Transverse colon (tissue), 4 donors: ENCODE measurements at regions of chr6 and their contacts with region 1.

Region 1: GRCh38 chr6:79117752-79118151 is 39.7 kb upstream of the PHIP start:
- DNase-seq: no peak
- H3K4me3 ChIP-seq: no peak overlapping the region
- H3K27ac ChIP-seq: no peak overlapping the region
- H3K4me1 ChIP-seq: no peaks in the 10 kb centered on the region
- H3K27me3 ChIP-seq: no peaks in the 10 kb centered on the region
- CTCF ChIP-seq: no peak
- EP300 ChIP-seq: no peak
- POLR2A ChIP-seq: no peak

Region 2: DNA sequence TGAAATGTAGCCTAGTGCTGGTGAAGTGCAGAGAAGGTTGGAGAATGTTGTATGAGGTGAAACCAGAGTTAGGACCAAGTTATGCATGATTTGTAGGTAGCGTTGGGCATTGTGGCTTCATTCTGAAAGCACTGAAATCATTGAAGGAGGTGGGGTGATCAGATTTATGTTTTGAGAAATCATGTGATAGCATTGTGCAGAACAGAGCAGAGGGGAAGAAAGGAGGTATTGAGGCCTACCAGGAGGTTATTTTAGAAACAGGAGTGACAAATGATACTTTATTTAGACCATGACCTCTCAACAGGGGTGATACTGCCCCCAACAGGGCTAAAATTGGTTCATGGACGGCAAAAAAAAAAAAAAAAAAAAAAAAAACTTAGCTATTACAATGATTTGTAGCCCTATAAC is 132.4 kb after region 1 on chr6:
- in situ Hi-C with region 1: loop called in 1 of 4 experiments (anchors 25 kb)
- intact Hi-C with region 1: no loop called
- DNase-seq: no peak
- H3K4me3 ChIP-seq: no peak overlapping the region
- H3K27ac ChIP-seq: no peak overlapping the region
- H3K4me1 ChIP-seq: no peaks in the 10 kb centered on the region
- H3K27me3 ChIP-seq: no peaks in the 10 kb centered on the region
- CTCF ChIP-seq: no peak
- EP300 ChIP-seq: no peak
- POLR2A ChIP-seq: no peak

Region 3: DNA sequence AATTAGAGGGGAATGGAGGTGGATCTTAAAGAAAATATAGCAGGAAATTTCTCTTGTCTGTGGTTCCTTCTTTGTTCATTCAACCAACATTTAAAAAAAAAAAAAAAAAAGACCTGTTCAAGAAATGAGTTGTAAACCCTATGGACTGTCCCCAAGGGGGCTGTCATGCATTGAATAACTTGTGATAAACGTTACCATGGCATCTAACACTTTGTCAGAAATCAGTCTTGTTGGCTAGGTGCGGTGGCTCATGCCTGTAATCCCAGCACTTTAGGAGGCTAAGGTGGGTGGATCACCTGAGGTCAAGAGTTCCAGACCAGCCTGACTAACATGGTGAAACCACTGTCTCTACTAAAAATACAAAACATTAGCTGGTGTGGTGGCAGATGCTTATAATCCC is 1370.4 kb after region 1 on chr6:
- in situ Hi-C with region 1: no loop called
- intact Hi-C with region 1: no loop called
- DNase-seq: no peak
- H3K4me3 ChIP-seq: no peak overlapping the region
- H3K27ac ChIP-seq: no peak overlapping the region
- H3K4me1 ChIP-seq: no peaks in the 10 kb centered on the region
- H3K27me3 ChIP-seq: no peaks in the 10 kb centered on the region
- CTCF ChIP-seq: no peak
- EP300 ChIP-seq: no peak
- POLR2A ChIP-seq: no peak